Mammary epithelial cell (primary cell): ENCODE measurements at regions of chr10 and their contacts with region 1.

Region 1: GRCh38 chr10:6580279-6581029 is 378 bp upstream of the PRKCQ start:
- DNase-seq: peak; percentile 59
- H3K4me3 ChIP-seq: peak overlapping the region; percentile 57 to 91 (median 63)
- H3K27ac ChIP-seq: peak overlapping the region; percentile 39
- H3K4me1 ChIP-seq: peaks cover 6% of the 10 kb centered on the region
- H3K27me3 ChIP-seq: no peaks in the 10 kb centered on the region
- CTCF ChIP-seq: peak in 1 of 2 donors; percentile 48

Region 2: DNA sequence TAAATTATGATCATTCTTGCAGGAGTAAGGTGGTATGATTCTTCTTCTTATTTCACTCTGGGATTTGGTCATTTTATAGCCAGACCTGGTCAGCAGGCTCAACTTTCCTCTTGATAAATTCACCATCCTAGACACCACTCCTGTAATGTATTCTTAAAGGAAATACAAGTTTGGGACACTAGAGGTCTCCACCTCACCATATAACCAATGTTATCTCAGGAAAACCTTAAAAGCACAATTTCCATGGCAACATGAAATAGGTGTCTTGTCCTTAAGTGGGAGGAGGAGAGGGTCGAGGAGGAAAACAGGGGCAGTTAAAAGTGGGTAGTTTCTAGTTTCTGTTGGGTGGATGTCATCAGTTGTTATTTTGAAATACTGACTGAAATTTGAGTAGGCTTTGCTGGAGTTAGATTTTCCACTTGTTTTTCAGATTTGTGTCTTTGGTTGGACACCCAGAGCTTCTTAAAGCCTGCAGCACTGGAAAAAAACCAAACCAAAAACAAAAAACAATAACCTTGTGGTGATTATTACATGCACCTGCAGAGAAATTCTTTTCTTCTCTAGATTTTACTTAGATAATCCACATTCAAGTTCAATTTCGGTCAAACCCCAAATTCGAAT is 163.5 kb before region 1 on chr10:
- CTCF ChIA-PET with region 1: interaction called, 7 read pairs
- dilution Hi-C with region 1: no loop called
- in situ Hi-C with region 1: no loop called
- intact Hi-C with region 1: loop called (anchors 1 kb)
- DNase-seq: peak; percentile 31
- H3K4me3 ChIP-seq: no peak overlapping the region
- H3K27ac ChIP-seq: no peak overlapping the region
- H3K4me1 ChIP-seq: no peaks in the 10 kb centered on the region
- H3K27me3 ChIP-seq: no peaks in the 10 kb centered on the region
- CTCF ChIP-seq: peak; percentile 64 to 70

Region 3: GRCh38 chr10:6445501-6446316 is 134.7 kb before region 1 on chr10:
- CTCF ChIA-PET with region 1: no interaction called
- dilution Hi-C with region 1: no loop called
- in situ Hi-C with region 1: no loop called
- intact Hi-C with region 1: loop called (anchors 1 kb)
- DNase-seq: peak; percentile 36
- H3K4me3 ChIP-seq: no peak overlapping the region
- H3K27ac ChIP-seq: no peak overlapping the region
- H3K4me1 ChIP-seq: no peaks in the 10 kb centered on the region
- H3K27me3 ChIP-seq: no peaks in the 10 kb centered on the region
- CTCF ChIP-seq: peak; percentile 55 to 61

Region 4: GRCh38 chr10:6478722-6479121 is 101.7 kb before region 1 on chr10:
- CTCF ChIA-PET with region 1: no interaction called
- dilution Hi-C with region 1: loop called (anchors 5 kb)
- in situ Hi-C with region 1: no loop called
- intact Hi-C with region 1: no loop called
- DNase-seq: no peak
- H3K4me3 ChIP-seq: no peak overlapping the region
- H3K27ac ChIP-seq: no peak overlapping the region
- H3K4me1 ChIP-seq: peaks cover 14% of the 10 kb centered on the region
- H3K27me3 ChIP-seq: no peaks in the 10 kb centered on the region
- CTCF ChIP-seq: peak in 1 of 2 donors; percentile 8

Region 5: DNA sequence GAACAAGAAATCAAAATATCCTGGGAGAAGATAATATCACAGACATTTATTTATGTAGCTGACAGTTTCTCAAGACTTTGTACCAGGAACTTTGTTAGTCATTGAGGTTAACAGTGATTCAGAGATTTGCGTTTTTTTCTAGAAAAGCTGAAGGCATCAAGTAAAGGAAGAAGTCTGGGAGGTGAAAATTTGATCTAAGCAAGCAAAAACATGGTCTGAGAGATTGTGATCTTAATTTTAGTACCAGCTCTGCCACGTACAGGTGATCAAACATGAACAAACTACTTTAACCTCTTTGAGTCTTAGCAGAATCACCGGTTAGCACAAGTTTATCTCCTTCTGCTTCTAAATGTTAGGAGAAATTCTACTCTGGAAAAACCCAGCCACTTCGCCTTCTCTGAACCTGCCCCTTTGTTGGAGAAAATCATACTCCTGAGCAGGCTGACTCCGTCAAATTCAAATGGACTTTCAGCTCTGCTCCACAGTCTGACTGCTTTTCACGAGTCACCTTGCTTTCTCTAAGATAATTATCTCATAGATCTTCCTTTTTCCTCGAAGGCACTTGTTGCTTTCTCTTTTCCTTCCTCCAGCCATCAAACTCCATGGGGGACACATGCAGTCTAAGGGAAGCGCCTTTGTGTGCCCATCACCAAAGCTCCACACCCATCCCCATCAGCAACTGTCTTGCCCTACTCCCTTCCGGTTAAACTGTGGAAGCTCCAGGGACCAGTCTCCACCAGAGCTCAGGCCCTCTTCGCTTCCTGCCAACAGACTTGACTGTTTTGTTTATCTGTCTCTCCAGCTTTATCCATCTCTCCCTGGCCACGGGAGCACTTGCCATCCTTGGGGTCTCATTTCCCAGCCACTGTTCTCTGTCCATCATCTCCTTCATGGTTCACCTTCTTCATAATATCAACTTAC is 86.7 kb before region 1 on chr10:
- CTCF ChIA-PET with region 1: no interaction called
- dilution Hi-C with region 1: no loop called
- in situ Hi-C with region 1: no loop called
- intact Hi-C with region 1: loop called (anchors 1 kb)
- DNase-seq: peak; percentile 89
- H3K4me3 ChIP-seq: no peak overlapping the region
- H3K27ac ChIP-seq: peak overlapping the region; percentile 80
- H3K4me1 ChIP-seq: peaks cover 42% of the 10 kb centered on the region
- H3K27me3 ChIP-seq: no peaks in the 10 kb centered on the region
- CTCF ChIP-seq: no peak

Region 6: GRCh38 chr10:6647811-6648526 is 67.5 kb after region 1 on chr10:
- CTCF ChIA-PET with region 1: no interaction called
- dilution Hi-C with region 1: no loop called
- in situ Hi-C with region 1: no loop called
- intact Hi-C with region 1: loop called (anchors 1 kb)
- DNase-seq: peak; percentile 43
- H3K4me3 ChIP-seq: no peak overlapping the region
- H3K27ac ChIP-seq: no peak overlapping the region
- H3K4me1 ChIP-seq: no peaks in the 10 kb centered on the region
- H3K27me3 ChIP-seq: no peaks in the 10 kb centered on the region
- CTCF ChIP-seq: peak; percentile 81 to 93

Region 7: DNA sequence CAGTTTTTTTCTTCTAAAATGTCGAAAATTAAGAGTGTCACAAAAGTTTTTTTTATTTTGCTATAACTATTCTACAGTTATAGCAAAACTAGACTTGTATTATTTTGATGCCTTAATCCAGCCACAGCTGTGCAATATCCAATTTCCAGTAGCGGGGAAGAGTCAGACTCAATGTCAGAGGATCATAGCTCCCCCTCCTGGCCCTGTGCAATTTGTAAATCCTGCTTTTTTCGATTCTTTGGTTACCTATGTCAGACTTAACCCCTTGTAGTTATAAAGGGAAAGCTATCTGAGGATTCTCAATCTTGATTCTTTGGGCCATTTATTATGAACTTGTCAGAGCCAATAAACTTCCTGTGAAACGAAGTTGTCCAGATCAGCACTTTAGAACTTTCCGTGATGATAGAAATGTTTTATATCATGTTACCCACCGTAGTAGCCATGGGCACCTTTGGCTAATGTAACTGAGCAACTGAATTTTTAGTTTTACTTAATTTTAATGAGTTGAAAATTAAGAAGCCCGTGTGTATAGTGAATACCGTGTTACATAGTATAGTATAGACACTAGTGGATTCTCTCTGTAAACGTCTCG is 87.3 kb after region 1 on chr10:
- CTCF ChIA-PET with region 1: interaction called, 6 read pairs
- dilution Hi-C with region 1: no loop called
- in situ Hi-C with region 1: no loop called
- intact Hi-C with region 1: loop called (anchors 1 kb)
- DNase-seq: peak; percentile 37
- H3K4me3 ChIP-seq: no peak overlapping the region
- H3K27ac ChIP-seq: no peak overlapping the region
- H3K4me1 ChIP-seq: peaks cover 4% of the 10 kb centered on the region
- H3K27me3 ChIP-seq: peaks cover 2% of the 10 kb centered on the region
- CTCF ChIP-seq: peak; percentile 60 to 76